Heart left ventricle (tissue), 16 donors: ENCODE measurements at regions of chr3 and their contacts with region 1.

Region 1: GRCh38 chr3:10945683-10946287 is 46.8 kb upstream of the SLC6A1 start:
- DNase-seq: peak; percentile 47 to 76 (median 61)
- ATAC-seq: peak; percentile 20 to 89 (median 84)
- H3K4me3 ChIP-seq: no peak overlapping the region
- H3K27ac ChIP-seq: no peak overlapping the region
- H3K4me1 ChIP-seq: peaks cover 0 to 8% (median 0%) of the 10 kb centered on the region in 12 donors
- H3K27me3 ChIP-seq: peaks cover 0 to 31% (median 0%) of the 10 kb centered on the region in 9 donors
- CTCF ChIP-seq: peak; percentile 71 to 94 (median 83)
- POLR2A ChIP-seq: no peak

Region 2: DNA sequence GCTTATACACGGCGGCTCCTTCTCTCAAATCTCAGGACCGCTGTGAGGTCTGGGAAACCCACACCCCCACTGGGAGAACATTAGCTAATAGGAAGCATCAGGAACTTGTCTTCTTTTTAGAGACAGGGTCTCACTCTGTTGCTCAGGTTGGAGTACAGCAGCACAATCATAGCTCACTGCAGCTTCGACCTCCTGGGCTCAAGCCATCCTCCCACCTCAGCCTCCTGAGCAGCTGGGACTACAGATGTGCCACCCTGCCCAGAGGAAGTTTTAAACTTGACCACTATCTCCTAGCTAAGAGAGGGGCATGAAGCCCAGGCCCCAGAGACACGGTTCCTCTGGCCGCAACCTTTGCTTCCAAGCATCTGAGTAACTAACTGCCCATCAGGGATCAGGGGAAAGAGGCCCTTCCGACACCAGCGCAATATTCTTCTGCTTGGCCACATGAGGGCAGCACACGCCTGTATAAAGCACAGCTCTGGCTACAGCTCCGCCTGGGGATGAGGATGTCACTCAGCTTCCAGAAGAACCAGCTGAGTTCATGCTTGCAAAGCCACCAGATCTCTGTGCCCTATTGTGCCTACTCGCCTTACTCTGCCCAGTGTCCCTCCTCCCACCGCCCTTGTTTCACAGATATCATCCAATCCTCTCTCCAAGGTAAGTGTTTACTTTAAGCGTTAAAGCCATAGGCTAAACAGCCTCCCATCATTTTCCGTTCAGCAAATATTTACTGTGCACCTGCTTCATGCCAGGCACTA is 187.3 kb before region 1 on chr3:
- intact Hi-C with region 1: loop called in 3 of 10 experiments (anchors 5 to 10 kb)
- DNase-seq: peak in 4 of 5 donors; percentile 36 to 45 (median 41)
- ATAC-seq: peak; percentile 69 to 88 (median 84)
- H3K4me3 ChIP-seq: no peak overlapping the region
- H3K27ac ChIP-seq: no peak overlapping the region
- H3K4me1 ChIP-seq: no peaks in the 10 kb centered on the region
- H3K27me3 ChIP-seq: peaks cover 0 to 43% (median 11%) of the 10 kb centered on the region in 9 donors
- CTCF ChIP-seq: peak; percentile 49 to 74 (median 64)
- POLR2A ChIP-seq: no peak

Region 3: GRCh38 chr3:10983219-10983916 is 37.6 kb after region 1 on chr3:
- intact Hi-C with region 1: loop called in 6 of 10 experiments (anchors 2 to 5 kb)
- DNase-seq: no peak
- ATAC-seq: peak in 3 of 4 donors; percentile 45 to 75 (median 63)
- H3K4me3 ChIP-seq: peak overlapping the region in 2 of 12 donors; percentile 8 to 27
- H3K27ac ChIP-seq: no peak overlapping the region
- H3K4me1 ChIP-seq: peaks cover 0 to 25% (median 16%) of the 10 kb centered on the region in 12 donors
- H3K27me3 ChIP-seq: peaks cover 0 to 4% (median 0%) of the 10 kb centered on the region in 9 donors
- CTCF ChIP-seq: peak; percentile 64 to 78 (median 69)
- POLR2A ChIP-seq: no peak

Region 4: GRCh38 chr3:11211531-11212298 is 265.9 kb after region 1 on chr3:
- intact Hi-C with region 1: loop called in 4 of 10 experiments (anchors 10 kb)
- DNase-seq: no peak
- ATAC-seq: peak in 1 of 4 donors; percentile 38
- H3K4me3 ChIP-seq: no peak overlapping the region
- H3K27ac ChIP-seq: peak overlapping the region in 1 of 12 donors; percentile 25
- H3K4me1 ChIP-seq: peaks cover 0 to 14% (median 0%) of the 10 kb centered on the region in 12 donors
- H3K27me3 ChIP-seq: no peaks in the 10 kb centered on the region
- CTCF ChIP-seq: peak in 1 of 12 donors; percentile 7
- POLR2A ChIP-seq: no peak